ENCODE measurements at regions of chr16 and their contacts with region 1.

Region 1: GRCh38 chr16:66830422-66831404 is at the start of gene NAE1:
- DNase-seq: peak; percentile 65 to 76
- ATAC-seq: peak; percentile 94 to 95
- H3K4me3 ChIP-seq: peak within 1 kb of the TSS; percentile 69 to 96 (median 86)
- H3K27ac ChIP-seq: peak within 1 kb of the TSS; percentile 65 to 92 (median 89)
- H3K4me1 ChIP-seq: peaks cover 9 to 11% of the 10 kb centered on the region in 2 donors
- H3K27me3 ChIP-seq: no peaks in the 10 kb centered on the region
- CTCF ChIP-seq: peak; percentile 91 to 98 (median 97)
- POLR2A ChIP-seq: peak; percentile 87 to 88
- total RNA-seq, gene NAE1: 29.1 to 57.0 (median 34.8) TPM

Region 2: GRCh38 chr16:66250686-66251431 is 579.9 kb before region 1 on chr16:
- in situ Hi-C with region 1: no loop called
- intact Hi-C with region 1: no loop called
- DNase-seq: peak; percentile 45 to 75
- ATAC-seq: peak; percentile 69 to 75
- H3K4me3 ChIP-seq: no peak overlapping the region
- H3K27ac ChIP-seq: peak overlapping the region; percentile 8 to 45 (median 38)
- H3K4me1 ChIP-seq: peaks cover 7 to 9% of the 10 kb centered on the region in 2 donors
- H3K27me3 ChIP-seq: no peaks in the 10 kb centered on the region
- CTCF ChIP-seq: no peak
- POLR2A ChIP-seq: no peak

Region 3: GRCh38 chr16:66740010-66740409 is 90.7 kb before region 1 on chr16:
- in situ Hi-C with region 1: no loop called
- intact Hi-C with region 1: loop called (anchors 5 kb)
- DNase-seq: no peak
- ATAC-seq: no peak
- H3K4me3 ChIP-seq: no peak overlapping the region
- H3K27ac ChIP-seq: peak overlapping the region; percentile 77 to 88 (median 84)
- H3K4me1 ChIP-seq: peaks cover 48 to 50% of the 10 kb centered on the region in 2 donors
- H3K27me3 ChIP-seq: no peaks in the 10 kb centered on the region
- CTCF ChIP-seq: peak in 4 of 5 experiments; percentile 35 to 58 (median 46)
- POLR2A ChIP-seq: no peak